ENCODE measurements at regions of chr1 and their contacts with region 1.

Region 1: GRCh38 chr1:114386129-114387009 is 124.6 kb downstream of the TRIM33 start:
- DNase-seq: no peak
- ATAC-seq: peak; percentile 44
- H3K4me3 Mint-ChIP-seq: no peak overlapping the region
- H3K27ac Mint-ChIP-seq: no peak overlapping the region
- H3K4me1 Mint-ChIP-seq: peaks cover 4% of the 10 kb centered on the region
- H3K27me3 Mint-ChIP-seq: no peaks in the 10 kb centered on the region

Region 2: DNA sequence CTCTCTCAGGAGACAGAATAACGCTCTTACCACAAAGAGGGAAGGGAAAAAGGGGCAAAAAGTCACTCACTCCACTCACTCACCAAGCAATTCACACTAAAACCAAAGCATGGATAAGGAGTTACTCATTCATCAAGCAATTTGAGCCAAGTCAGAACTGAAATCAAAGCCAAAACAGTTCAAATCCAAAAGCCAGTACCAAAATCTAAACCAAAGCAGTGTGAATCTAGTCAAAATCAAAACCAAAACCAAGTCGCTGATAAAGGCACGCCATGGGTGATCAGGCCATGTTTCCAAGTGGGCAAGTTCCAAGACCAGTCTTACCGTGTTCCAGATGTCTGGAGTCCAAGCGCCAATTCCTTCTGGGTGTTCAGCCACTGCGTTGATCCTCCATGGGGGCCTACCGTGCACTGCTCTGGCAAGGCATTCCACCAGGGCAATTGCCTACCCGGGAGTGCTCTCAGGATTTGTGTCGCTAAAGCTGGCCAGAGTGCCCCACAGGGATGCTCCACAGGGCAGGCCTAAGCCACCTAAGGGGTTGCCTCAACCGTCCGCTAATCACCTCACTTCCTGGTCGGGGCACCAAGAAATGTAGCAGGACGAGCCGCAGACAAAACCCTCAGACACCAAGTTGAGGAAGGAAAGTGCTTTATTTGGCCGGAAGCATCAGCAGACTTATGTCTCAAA is 17.7 kb before region 1 on chr1:
- CTCF ChIA-PET with region 1: no interaction called
- POLR2A ChIA-PET with region 1: no interaction called
- intact Hi-C with region 1: no loop called
- DNase-seq: no peak
- ATAC-seq: no peak
- H3K4me3 Mint-ChIP-seq: no peak overlapping the region
- H3K27ac Mint-ChIP-seq: no peak overlapping the region
- H3K4me1 Mint-ChIP-seq: no peaks in the 10 kb centered on the region
- H3K27me3 Mint-ChIP-seq: no peaks in the 10 kb centered on the region

Region 3: DNA sequence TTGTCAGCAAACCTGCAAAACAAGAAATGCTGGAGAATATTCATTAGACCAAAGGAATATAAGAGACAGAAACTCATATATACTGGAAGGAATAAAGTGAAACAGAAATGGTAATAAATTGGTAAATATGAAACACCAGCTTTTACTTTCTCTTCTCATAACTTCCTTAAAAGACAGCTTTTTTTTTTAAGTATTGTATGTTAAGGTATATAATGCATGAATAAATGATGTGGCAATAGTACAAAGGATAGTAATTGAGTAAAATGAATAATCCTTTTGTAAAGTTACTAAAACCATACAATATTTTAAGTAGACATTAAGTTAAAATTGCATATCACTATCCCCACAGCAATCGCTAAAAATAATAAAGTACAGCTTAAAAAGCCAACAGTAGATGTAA is 59.8 kb after region 1 on chr1:
- CTCF ChIA-PET with region 1: no interaction called
- POLR2A ChIA-PET with region 1: no interaction called
- intact Hi-C with region 1: loop called in 1 of 2 experiments (anchors 10 kb)
- DNase-seq: no peak
- ATAC-seq: no peak
- H3K4me3 Mint-ChIP-seq: no peak overlapping the region
- H3K27ac Mint-ChIP-seq: no peak overlapping the region
- H3K4me1 Mint-ChIP-seq: peaks cover 9% of the 10 kb centered on the region
- H3K27me3 Mint-ChIP-seq: no peaks in the 10 kb centered on the region